A549 (cell line): ENCODE measurements at regions of chr17 and their contacts with region 1.

Region 1: DNA sequence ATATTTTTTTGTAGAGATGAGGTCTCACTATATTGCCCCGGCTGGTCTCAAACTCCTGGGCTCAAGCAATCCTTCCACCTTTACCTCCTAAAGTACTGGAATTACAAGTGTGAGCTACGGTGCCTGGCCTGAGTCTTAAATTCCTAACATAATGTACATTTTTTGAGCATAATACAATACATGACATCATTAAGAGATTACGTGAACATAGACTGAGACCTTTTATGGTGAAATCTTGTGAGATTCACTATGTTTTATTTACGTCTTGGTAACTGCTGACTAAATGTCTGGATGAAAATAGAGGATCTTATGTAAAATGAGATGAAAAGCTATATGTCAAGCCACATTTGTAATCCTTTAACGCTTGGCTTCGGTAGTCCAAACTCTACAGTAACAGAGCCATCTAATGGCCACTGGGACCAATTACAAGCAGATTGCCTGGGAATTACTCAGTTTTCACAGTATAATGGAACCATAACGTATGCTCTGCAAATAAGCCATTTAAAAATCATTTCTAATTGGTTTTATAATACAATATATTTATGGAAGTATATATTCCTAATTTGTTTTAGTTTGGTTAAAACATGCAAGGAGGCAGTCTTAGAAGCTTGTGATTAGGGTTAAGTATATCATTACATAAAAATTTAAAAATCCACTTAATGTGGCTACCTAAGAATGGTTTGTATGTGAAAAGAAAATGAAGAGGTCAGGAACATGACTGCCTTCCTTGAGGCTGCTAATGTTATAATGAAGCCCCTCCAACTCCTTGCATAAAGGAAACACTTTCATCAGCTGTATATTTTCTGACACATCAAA is 8.1 kb upstream of the EFCAB13 start:
- DNase-seq: peak; percentile 78 to 84
- ATAC-seq: peak; percentile 86 to 94
- H3K4me3 ChIP-seq: no peak overlapping the region
- H3K27ac ChIP-seq: peak overlapping the region in 1 of 2 experiments; percentile 39; a peak in 2 of 6 replicates
- H3K4me1 ChIP-seq: peaks cover 16% of the 10 kb centered on the region
- CTCF ChIP-seq: peak; percentile 97
- EP300 ChIP-seq: no peak
- POLR2A ChIP-seq: no peak
- RAD21 ChIP-seq: peak; percentile 97 to 99

Region 2: DNA sequence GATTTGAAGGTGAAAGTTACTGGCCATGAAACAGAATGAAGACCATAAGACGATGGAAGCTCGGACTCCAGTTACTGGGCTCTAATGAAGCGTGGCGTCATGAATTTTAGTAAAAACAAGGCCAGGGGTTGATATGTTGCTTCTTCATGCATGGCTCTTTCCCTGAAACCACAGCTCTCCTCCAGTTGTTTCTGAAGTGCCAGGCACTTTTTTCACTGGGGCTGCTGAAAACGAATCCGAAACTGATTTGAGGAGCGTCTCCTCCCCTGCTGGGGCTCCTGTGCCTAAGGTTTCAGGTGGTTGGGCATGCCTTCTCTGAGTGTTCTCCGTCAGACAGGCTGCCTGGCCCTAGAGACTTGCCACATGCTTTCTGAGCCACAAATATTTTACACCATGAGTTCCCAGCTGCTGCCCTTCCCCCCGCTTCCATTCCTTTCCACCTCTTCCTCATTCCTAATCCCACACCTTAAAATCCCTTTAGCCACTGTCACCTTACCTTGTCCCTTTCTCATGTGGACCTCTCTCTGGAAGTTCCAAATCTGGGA is 110.2 kb before region 1 on chr17:
- CTCF ChIA-PET with region 1: interaction called, 10 read pairs
- POLR2A ChIA-PET with region 1: no interaction called
- DNase-seq: no peak
- ATAC-seq: no peak
- H3K4me3 ChIP-seq: no peak overlapping the region
- H3K27ac ChIP-seq: no peak overlapping the region
- H3K4me1 ChIP-seq: no peaks in the 10 kb centered on the region
- CTCF ChIP-seq: no peak
- EP300 ChIP-seq: no peak
- POLR2A ChIP-seq: no peak
- RAD21 ChIP-seq: no peak

Region 3: GRCh38 chr17:47239619-47240374 is 75.9 kb before region 1 on chr17:
- CTCF ChIA-PET with region 1: interaction called, 204 read pairs
- POLR2A ChIA-PET with region 1: interaction called, 5 read pairs
- DNase-seq: peak; percentile 50 to 75
- ATAC-seq: peak; percentile 69 to 84
- H3K4me3 ChIP-seq: no peak overlapping the region
- H3K27ac ChIP-seq: peak overlapping the region; percentile 53 to 81
- H3K4me1 ChIP-seq: peaks cover 13% of the 10 kb centered on the region
- CTCF ChIP-seq: no peak
- EP300 ChIP-seq: no peak
- POLR2A ChIP-seq: no peak
- RAD21 ChIP-seq: no peak

Region 4: GRCh38 chr17:47265983-47266541 is 49.6 kb before region 1 on chr17:
- CTCF ChIA-PET with region 1: interaction called, 10 read pairs
- POLR2A ChIA-PET with region 1: no interaction called
- DNase-seq: peak in 1 of 2 experiments; percentile 30
- ATAC-seq: peak; percentile 42 to 70; a peak in 3 of 6 replicates
- H3K4me3 ChIP-seq: no peak overlapping the region
- H3K27ac ChIP-seq: peak overlapping the region; percentile 23 to 46; a peak in 3 of 6 replicates
- H3K4me1 ChIP-seq: peaks cover 20% of the 10 kb centered on the region
- CTCF ChIP-seq: no peak
- EP300 ChIP-seq: no peak
- POLR2A ChIP-seq: no peak
- RAD21 ChIP-seq: no peak

Region 5: GRCh38 chr17:47305302-47305923 is 10.2 kb before region 1 on chr17:
- CTCF ChIA-PET with region 1: interaction called, 31 read pairs
- POLR2A ChIA-PET with region 1: no interaction called
- DNase-seq: peak; percentile 35 to 66
- ATAC-seq: peak; percentile 58 to 89
- H3K4me3 ChIP-seq: no peak overlapping the region
- H3K27ac ChIP-seq: peak overlapping the region in 1 of 2 experiments; percentile 73; a peak in 3 of 6 replicates
- H3K4me1 ChIP-seq: peaks cover 20% of the 10 kb centered on the region
- CTCF ChIP-seq: no peak
- EP300 ChIP-seq: 0 out of 5 replicates have a peak, but pooled peaks of 1 of the 2 experiments have one; percentile 26
- POLR2A ChIP-seq: no peak
- RAD21 ChIP-seq: no peak